Lower lobe of right lung (tissue), 2 donors: ENCODE measurements at regions of chr1 and their contacts with region 1.

Region 1: GRCh38 chr1:150629115-150629928 is at the start of gene ENSA:
- DNase-seq: peak; percentile 98
- ATAC-seq: peak; percentile 96 to 97
- H3K4me3 ChIP-seq: peak within 1 kb of the TSS; percentile 75
- H3K27ac ChIP-seq: peak within 1 kb of the TSS; percentile 94
- H3K4me1 ChIP-seq: peaks cover 21% of the 10 kb centered on the region
- H3K27me3 ChIP-seq: no peaks in the 10 kb centered on the region
- CTCF ChIP-seq: no peak
- total RNA-seq, gene ENSA: 172 TPM

Region 2: DNA sequence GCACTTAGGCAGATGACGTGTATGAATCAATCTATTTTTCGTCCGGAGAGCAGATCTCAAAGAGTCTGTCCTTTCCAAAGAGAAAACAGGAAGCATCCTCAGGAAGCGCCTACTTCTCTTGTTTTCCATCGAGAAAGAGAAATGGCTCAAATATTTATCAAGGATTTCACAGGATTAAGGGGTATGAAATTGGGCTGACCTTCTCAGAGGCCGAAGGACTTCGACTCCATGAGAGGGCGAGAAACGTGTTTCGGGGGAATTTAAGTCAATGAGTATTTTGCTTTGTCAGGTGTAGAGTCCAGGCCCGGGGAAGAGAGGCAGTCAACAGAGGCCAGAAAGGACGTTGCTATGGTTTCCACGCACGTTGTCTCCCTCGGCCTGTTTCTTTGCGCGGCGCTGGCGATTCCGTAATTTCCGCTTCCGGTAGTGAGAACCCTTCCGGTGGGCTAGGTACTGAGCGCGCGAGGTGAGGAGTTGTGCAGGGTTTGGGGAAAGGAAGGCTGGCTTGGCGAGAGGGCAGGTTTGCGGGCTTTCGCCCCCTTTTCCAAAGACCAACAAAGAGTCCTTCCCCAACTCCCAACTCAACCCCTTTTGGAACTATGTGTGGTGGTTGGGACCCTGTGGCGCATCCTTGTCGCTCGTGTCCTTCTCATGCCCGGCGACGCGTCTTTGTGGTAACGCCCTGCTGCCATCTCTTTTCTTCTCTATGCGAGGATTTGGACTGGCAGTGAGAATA is 335.7 kb before region 1 on chr1 and contains the start of gene MRPS21:
- intact Hi-C with region 1: no loop called
- DNase-seq: peak; percentile 93
- ATAC-seq: peak; percentile 98 to 99
- H3K4me3 ChIP-seq: peak within 1 kb of the TSS; percentile 73
- H3K27ac ChIP-seq: peak within 1 kb of the TSS; percentile 90
- H3K4me1 ChIP-seq: peaks cover 6% of the 10 kb centered on the region
- H3K27me3 ChIP-seq: no peaks in the 10 kb centered on the region
- CTCF ChIP-seq: no peak
- total RNA-seq, gene MRPS21: 45.9 TPM

Region 3: DNA sequence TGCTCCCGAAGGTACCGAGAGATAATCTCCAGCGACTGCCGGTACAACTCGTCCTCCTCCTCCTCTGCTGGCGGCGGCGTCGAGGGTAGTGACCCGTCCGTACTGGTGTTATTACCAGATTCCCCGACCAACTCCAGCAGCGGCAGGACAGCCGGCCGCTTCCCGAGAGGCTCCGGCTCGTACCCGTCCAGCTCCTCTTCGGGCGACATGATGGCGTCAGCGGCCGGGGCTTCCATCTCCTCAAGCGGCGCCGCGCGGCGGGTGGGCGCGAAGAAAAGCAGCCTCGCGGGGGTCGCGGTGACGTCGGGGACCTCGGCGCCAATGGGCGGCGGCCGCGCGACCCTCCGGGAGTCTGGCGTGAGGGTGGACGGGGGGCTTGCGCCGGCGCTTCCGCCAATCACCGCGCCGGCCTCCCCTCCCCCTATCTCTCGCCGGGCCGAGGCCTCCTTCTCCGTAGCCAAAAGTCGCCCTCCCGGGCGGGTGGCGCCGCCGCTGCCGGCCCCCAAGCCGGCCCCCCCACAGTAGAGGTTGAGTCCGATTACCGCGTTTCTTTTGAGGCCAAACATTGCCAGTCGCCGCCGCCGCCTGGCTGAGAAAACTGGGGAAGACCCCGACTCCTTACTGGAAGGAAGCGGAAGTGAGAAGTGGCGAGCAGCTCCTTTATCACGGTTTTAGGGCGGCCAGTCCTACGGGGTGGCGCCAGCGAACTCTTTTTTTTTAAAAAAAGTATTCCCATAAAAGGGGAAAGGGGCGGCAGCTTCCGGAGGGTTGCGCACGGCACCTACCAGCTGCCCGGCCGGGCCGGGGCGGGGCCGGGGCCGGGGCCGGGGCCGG is 50.1 kb before region 1 on chr1 and contains the start of gene MCL1:
- intact Hi-C with region 1: loop called (anchors 10 kb)
- DNase-seq: peak; percentile 98
- ATAC-seq: peak; percentile 90 to 96
- H3K4me3 ChIP-seq: peak within 1 kb of the TSS; percentile 96
- H3K27ac ChIP-seq: peak within 1 kb of the TSS; percentile 99
- H3K4me1 ChIP-seq: peaks cover 37% of the 10 kb centered on the region
- H3K27me3 ChIP-seq: no peaks in the 10 kb centered on the region
- CTCF ChIP-seq: peak; percentile 10
- total RNA-seq, gene MCL1: 387 TPM